ENCODE measurements at regions of chr6 and their contacts with region 1.

Region 1: GRCh38 chr6:22558334-22558747 is 11.0 kb upstream of the HDGFL1 start:
- DNase-seq: peak; percentile 93
- ATAC-seq: peak; percentile 95
- H3K4me3 ChIP-seq: no peak overlapping the region
- H3K27ac ChIP-seq: peak overlapping the region; percentile 74
- H3K4me1 ChIP-seq: peaks cover 21% of the 10 kb centered on the region
- H3K27me3 ChIP-seq: no peaks in the 10 kb centered on the region
- CTCF ChIP-seq: no peak

Region 2: DNA sequence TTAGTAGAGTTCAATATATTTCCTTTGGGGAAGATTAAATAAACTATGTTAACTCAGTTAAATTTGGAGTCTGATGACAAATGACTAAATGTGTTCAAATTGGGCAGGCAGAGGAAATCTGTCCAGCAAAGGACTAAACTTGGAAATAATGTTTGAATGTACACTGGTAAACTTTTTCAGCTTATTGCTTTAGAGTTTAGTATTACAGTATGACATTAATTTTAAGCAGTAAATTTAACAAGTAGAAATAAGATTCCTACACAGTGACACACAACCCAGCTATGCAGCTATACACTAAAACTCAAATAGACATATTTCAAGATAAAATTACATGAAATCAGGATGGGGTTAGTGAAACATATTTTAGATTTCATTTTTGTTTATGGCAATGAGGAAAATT is 31.6 kb before region 1 on chr6:
- CTCF ChIA-PET with region 1: no interaction called
- POLR2A ChIA-PET with region 1: no interaction called
- intact Hi-C with region 1: loop called (anchors 2 kb)
- DNase-seq: peak; percentile 45
- ATAC-seq: peak; percentile 97
- H3K4me3 ChIP-seq: no peak overlapping the region
- H3K27ac ChIP-seq: no peak overlapping the region
- H3K4me1 ChIP-seq: peaks cover 20% of the 10 kb centered on the region; the same call in 1 of the 2 replicates
- H3K27me3 ChIP-seq: no peaks in the 10 kb centered on the region
- CTCF ChIP-seq: no peak